Calu3 (cell line): ENCODE measurements at regions of chr12 and their contacts with region 1.

Region 1: GRCh38 chr12:77122236-77122635 is 56.9 kb upstream of the E2F7 start:
- DNase-seq: peak; percentile 54
- H3K4me3 Mint-ChIP-seq: no peak overlapping the region
- H3K27ac Mint-ChIP-seq: peak overlapping the region; percentile 85
- H3K4me1 Mint-ChIP-seq: peaks cover 27% of the 10 kb centered on the region
- H3K27me3 Mint-ChIP-seq: no peaks in the 10 kb centered on the region
- CTCF ChIP-seq: no peak

Region 2: DNA sequence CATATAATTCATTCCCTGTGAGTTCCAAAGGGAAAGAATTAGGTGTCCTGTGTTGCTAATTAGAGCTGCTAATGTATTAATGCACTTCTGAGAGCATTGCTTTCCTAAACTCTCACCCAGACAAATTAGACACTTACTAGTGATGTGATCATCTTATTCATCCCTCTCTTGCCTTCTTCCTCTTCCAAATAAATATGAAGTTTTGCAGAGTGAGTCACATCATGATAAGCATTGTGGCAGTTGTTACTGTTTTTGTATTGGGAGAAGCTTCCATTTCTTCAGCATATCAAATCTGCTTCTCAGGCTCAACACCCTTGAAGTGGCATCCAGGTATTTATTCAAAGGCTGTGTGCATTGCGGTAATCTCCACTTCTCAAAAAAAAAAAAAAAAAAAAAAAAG is 19.5 kb before region 1 on chr12:
- CTCF ChIA-PET with region 1: interaction called, 3 read pairs
- intact Hi-C with region 1: loop called (anchors 2 kb)
- DNase-seq: no peak
- H3K4me3 Mint-ChIP-seq: no peak overlapping the region
- H3K27ac Mint-ChIP-seq: peak overlapping the region; percentile 82
- H3K4me1 Mint-ChIP-seq: peaks cover 38% of the 10 kb centered on the region
- H3K27me3 Mint-ChIP-seq: no peaks in the 10 kb centered on the region
- CTCF ChIP-seq: no peak